HepG2 (cell line): ENCODE measurements at regions of chr3 and their contacts with region 1.

Region 1: GRCh38 chr3:10205451-10206165 is 40.9 kb downstream of the IRAK2 start:
- DNase-seq: no peak
- ATAC-seq: no peak
- H3K4me3 ChIP-seq: no peak overlapping the region
- H3K27ac ChIP-seq: peak overlapping the region; percentile 93
- H3K4me1 ChIP-seq: peaks cover 60% of the 10 kb centered on the region
- H3K27me3 ChIP-seq: no peaks in the 10 kb centered on the region
- CTCF ChIP-seq: no peak
- EP300 ChIP-seq: no peak
- POLR2A ChIP-seq: no peak
- RAD21 ChIP-seq: no peak

Region 2: GRCh38 chr3:10142707-10143566 is 62.7 kb before region 1 on chr3:
- CTCF ChIA-PET with region 1: no interaction called
- POLR2A ChIA-PET with region 1: interaction called, 23 read pairs
- in situ Hi-C with region 1: no loop called
- intact Hi-C with region 1: no loop called
- DNase-seq: no peak
- ATAC-seq: peak; percentile 23
- H3K4me3 ChIP-seq: peak overlapping the region; percentile 57 to 89 (median 66)
- H3K27ac ChIP-seq: peak overlapping the region; percentile 39
- H3K4me1 ChIP-seq: peaks cover 63% of the 10 kb centered on the region
- H3K27me3 ChIP-seq: no peaks in the 10 kb centered on the region
- CTCF ChIP-seq: no peak
- EP300 ChIP-seq: no peak
- POLR2A ChIP-seq: no peak
- RAD21 ChIP-seq: no peak

Region 3: GRCh38 chr3:10192953-10193691 is 12.5 kb before region 1 on chr3:
- CTCF ChIA-PET with region 1: no interaction called
- POLR2A ChIA-PET with region 1: interaction called, 117 read pairs
- in situ Hi-C with region 1: no loop called
- intact Hi-C with region 1: loop called (anchors 1 kb)
- DNase-seq: peak; percentile 28
- ATAC-seq: peak; percentile 39
- H3K4me3 ChIP-seq: no peak overlapping the region
- H3K27ac ChIP-seq: peak overlapping the region; percentile 65
- H3K4me1 ChIP-seq: peaks cover 60% of the 10 kb centered on the region
- H3K27me3 ChIP-seq: no peaks in the 10 kb centered on the region
- CTCF ChIP-seq: 0 out of 2 replicates have a peak, but pooled peaks have one; percentile 11
- EP300 ChIP-seq: no peak
- POLR2A ChIP-seq: no peak
- RAD21 ChIP-seq: no peak